Activated CD4-positive, alpha-beta memory T cell treated with anti-CD3 and anti-CD28 coated beads for 36 hours (primary cell): ENCODE measurements at regions of chr3 and their contacts with region 1.

Region 1: GRCh38 chr3:138434276-138434874 is at the start of gene ESYT3:
- DNase-seq: peak; percentile 80
- H3K4me3 Mint-ChIP-seq: peak within 1 kb of the TSS; percentile 69
- H3K27ac Mint-ChIP-seq: no peak within 1 kb of the TSS
- H3K4me1 Mint-ChIP-seq: peaks cover 10% of the 10 kb centered on the region
- H3K27me3 Mint-ChIP-seq: peaks cover 47% of the 10 kb centered on the region
- total RNA-seq, gene ESYT3: 0.17 to 0.19 TPM

Region 2: DNA sequence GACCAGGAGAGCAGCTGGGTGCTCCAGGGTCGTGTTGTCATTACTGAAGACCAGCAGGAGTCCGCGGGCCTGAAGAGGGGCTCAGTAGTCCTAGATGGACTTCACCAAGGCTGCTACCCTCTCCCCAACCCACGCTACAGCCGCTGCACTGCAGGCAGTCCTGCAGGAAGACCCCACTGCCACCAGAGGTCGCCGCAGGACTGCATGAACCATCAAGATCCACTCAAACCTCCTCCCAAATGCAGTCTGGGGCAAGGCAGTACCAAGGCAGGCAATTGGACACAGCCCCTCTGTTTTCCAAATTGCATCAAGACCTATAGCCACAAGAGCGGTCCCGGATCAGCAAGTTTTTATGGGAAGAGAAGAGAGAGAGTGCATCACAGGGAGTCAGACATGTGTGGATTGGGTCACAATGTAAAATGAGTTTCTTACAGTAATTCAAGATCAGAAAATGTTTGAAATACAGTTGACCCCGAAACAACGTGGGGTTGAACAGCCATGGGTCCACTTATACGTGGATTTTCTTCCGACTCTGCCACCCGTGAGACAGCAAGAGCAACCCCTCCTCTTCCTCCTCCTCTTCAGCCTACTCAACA is 365.7 kb before region 1 on chr3:
- CTCF ChIA-PET with region 1: no interaction called
- POLR2A ChIA-PET with region 1: no interaction called
- intact Hi-C with region 1: no loop called
- DNase-seq: peak; percentile 86
- H3K4me3 Mint-ChIP-seq: no peak overlapping the region
- H3K27ac Mint-ChIP-seq: no peak overlapping the region
- H3K4me1 Mint-ChIP-seq: peaks cover 14% of the 10 kb centered on the region
- H3K27me3 Mint-ChIP-seq: peaks cover 25% of the 10 kb centered on the region

Region 3: GRCh38 chr3:138417559-138417982 is 16.8 kb before region 1 on chr3:
- CTCF ChIA-PET with region 1: interaction called, 24 read pairs
- POLR2A ChIA-PET with region 1: no interaction called
- intact Hi-C with region 1: no loop called
- DNase-seq: peak; percentile 74
- H3K4me3 Mint-ChIP-seq: no peak overlapping the region
- H3K27ac Mint-ChIP-seq: no peak overlapping the region
- H3K4me1 Mint-ChIP-seq: no peaks in the 10 kb centered on the region
- H3K27me3 Mint-ChIP-seq: peaks cover 9% of the 10 kb centered on the region

Region 4: GRCh38 chr3:139006051-139006716 is 571.8 kb after region 1 on chr3 and contains the start of gene PRR23A:
- CTCF ChIA-PET with region 1: no interaction called
- POLR2A ChIA-PET with region 1: no interaction called
- intact Hi-C with region 1: no loop called
- DNase-seq: no peak
- H3K4me3 Mint-ChIP-seq: no peak within 1 kb of the TSS
- H3K27ac Mint-ChIP-seq: no peak within 1 kb of the TSS
- H3K4me1 Mint-ChIP-seq: no peaks in the 10 kb centered on the region
- H3K27me3 Mint-ChIP-seq: peaks cover 3% of the 10 kb centered on the region
- total RNA-seq, gene PRR23A: not detected